ENCODE measurements at regions of chr1 and their contacts with region 1.

Region 1: DNA sequence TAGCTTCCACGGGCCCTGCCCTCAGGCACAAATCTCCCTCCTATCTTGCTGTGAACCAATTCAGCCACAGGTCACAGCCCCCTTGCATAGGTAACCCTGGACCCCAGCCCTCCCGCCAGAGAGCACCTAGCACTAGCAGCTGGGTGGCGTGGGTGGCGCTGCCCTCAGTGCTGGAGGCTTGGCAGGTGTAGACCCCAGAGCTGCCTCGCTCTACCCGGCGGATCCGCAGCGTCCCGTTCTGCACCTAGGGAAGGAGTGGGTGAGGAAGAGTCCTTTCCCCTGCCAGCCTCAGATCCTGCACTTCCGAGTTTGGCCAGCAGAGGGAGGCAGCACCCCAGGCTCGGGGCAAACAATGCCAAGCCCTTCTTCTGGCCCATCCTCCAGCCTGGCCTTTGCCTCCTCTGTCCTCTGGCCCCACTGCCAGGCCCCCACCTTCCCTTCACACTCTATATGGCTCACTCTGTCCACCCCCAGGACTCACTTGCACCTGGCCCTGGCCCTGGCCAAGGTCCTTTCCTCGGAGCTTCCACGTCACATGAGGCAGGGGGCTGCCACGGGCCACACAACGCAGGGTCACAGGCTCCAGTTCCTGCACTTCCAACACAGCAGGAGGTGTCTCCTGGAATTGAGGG is 9.0 kb downstream of the IGSF9 start:
- DNase-seq: peak; percentile 84
- ATAC-seq: peak; percentile 80
- H3K4me3 Mint-ChIP-seq: no peak overlapping the region
- H3K27ac Mint-ChIP-seq: no peak overlapping the region
- H3K4me1 Mint-ChIP-seq: peaks cover 15% of the 10 kb centered on the region
- H3K27me3 Mint-ChIP-seq: peaks cover 18% of the 10 kb centered on the region

Region 2: GRCh38 chr1:159924981-159925712 is 11.2 kb before region 1 on chr1 and contains the start of gene TAGLN2:
- CTCF ChIA-PET with region 1: interaction called, 51 read pairs
- DNase-seq: peak; percentile 93
- ATAC-seq: peak; percentile 70
- H3K4me3 Mint-ChIP-seq: peak within 1 kb of the TSS; percentile 95
- H3K27ac Mint-ChIP-seq: peak within 1 kb of the TSS; percentile 98
- H3K4me1 Mint-ChIP-seq: peaks cover 41% of the 10 kb centered on the region
- H3K27me3 Mint-ChIP-seq: no peaks in the 10 kb centered on the region
- total RNA-seq, gene TAGLN2: 479 to 513 TPM

Region 3: GRCh38 chr1:160022330-160023310 is 86.2 kb after region 1 on chr1:
- CTCF ChIA-PET with region 1: no interaction called
- DNase-seq: no peak
- ATAC-seq: no peak
- H3K4me3 Mint-ChIP-seq: no peak overlapping the region
- H3K27ac Mint-ChIP-seq: no peak overlapping the region
- H3K4me1 Mint-ChIP-seq: peaks cover 28% of the 10 kb centered on the region
- H3K27me3 Mint-ChIP-seq: no peaks in the 10 kb centered on the region

Region 4: GRCh38 chr1:160085686-160086455 is 149.5 kb after region 1 on chr1:
- CTCF ChIA-PET with region 1: interaction called, 11 read pairs
- DNase-seq: peak; percentile 83
- ATAC-seq: peak; percentile 61
- H3K4me3 Mint-ChIP-seq: no peak overlapping the region
- H3K27ac Mint-ChIP-seq: no peak overlapping the region
- H3K4me1 Mint-ChIP-seq: peaks cover 7% of the 10 kb centered on the region
- H3K27me3 Mint-ChIP-seq: peaks cover 24% of the 10 kb centered on the region

Measured in activated CD8-positive, alpha-beta memory T cell treated with anti-CD3 and anti-CD28 coated beads, Interleukin-2, amount 10 ng/mL, durations not matched to agents 7 days and 5 days (primary cell).